CD8-positive, alpha-beta T cell (primary cell): ENCODE measurements at regions of chr19 and their contacts with region 1.

Region 1: GRCh38 chr19:54481322-54481930 is 8.3 kb upstream of the CDC42EP5 start:
- DNase-seq: peak in 7 of 9 experiments; percentile 25 to 79 (median 40)
- ATAC-seq: peak; percentile 63
- H3K4me3 ChIP-seq: no peak overlapping the region
- H3K4me3 Mint-ChIP-seq: no peak overlapping the region
- H3K27ac ChIP-seq: no peak overlapping the region
- H3K27ac Mint-ChIP-seq: no peak overlapping the region
- H3K4me1 ChIP-seq: peaks cover 3% of the 10 kb centered on the region
- H3K4me1 Mint-ChIP-seq: peaks cover 7% of the 10 kb centered on the region
- H3K27me3 ChIP-seq: peaks cover 0 to 8% of the 10 kb centered on the region in 2 experiments
- H3K27me3 Mint-ChIP-seq: peaks cover 42% of the 10 kb centered on the region
- CTCF ChIP-seq: peak; percentile 89

Region 2: GRCh38 chr19:54430306-54431254 is 50.8 kb before region 1 on chr19:
- CTCF ChIA-PET with region 1: interaction called, 5 read pairs
- POLR2A ChIA-PET with region 1: no interaction called
- intact Hi-C with region 1: loop called (anchors 5 kb)
- DNase-seq: peak in 7 of 9 experiments; percentile 17 to 60 (median 44)
- ATAC-seq: peak; percentile 94
- H3K4me3 ChIP-seq: peak overlapping the region; percentile 12 to 41
- H3K4me3 Mint-ChIP-seq: peak overlapping the region; percentile 57
- H3K27ac ChIP-seq: no peak overlapping the region
- H3K27ac Mint-ChIP-seq: peak overlapping the region; percentile 32
- H3K4me1 ChIP-seq: peaks cover 21% of the 10 kb centered on the region
- H3K4me1 Mint-ChIP-seq: peaks cover 16% of the 10 kb centered on the region
- H3K27me3 ChIP-seq: peaks cover 0 to 9% of the 10 kb centered on the region in 2 experiments
- H3K27me3 Mint-ChIP-seq: peaks cover 25% of the 10 kb centered on the region
- CTCF ChIP-seq: peak; percentile 13

Region 3: GRCh38 chr19:54677217-54677616 is 195.8 kb after region 1 on chr19:
- CTCF ChIA-PET with region 1: interaction called, 13 read pairs
- POLR2A ChIA-PET with region 1: no interaction called
- intact Hi-C with region 1: loop called in 1 of 2 experiments (anchors 2 kb)
- DNase-seq: no peak
- ATAC-seq: no peak
- H3K4me3 ChIP-seq: no peak overlapping the region
- H3K4me3 Mint-ChIP-seq: no peak overlapping the region
- H3K27ac ChIP-seq: no peak overlapping the region
- H3K27ac Mint-ChIP-seq: no peak overlapping the region
- H3K4me1 ChIP-seq: no peaks in the 10 kb centered on the region
- H3K4me1 Mint-ChIP-seq: no peaks in the 10 kb centered on the region
- H3K27me3 ChIP-seq: peaks cover 0 to 7% of the 10 kb centered on the region in 2 experiments
- H3K27me3 Mint-ChIP-seq: peaks cover 8% of the 10 kb centered on the region
- CTCF ChIP-seq: no peak